PC-3 (cell line): ENCODE measurements at regions of chr4 and their contacts with region 1.

Region 1: DNA sequence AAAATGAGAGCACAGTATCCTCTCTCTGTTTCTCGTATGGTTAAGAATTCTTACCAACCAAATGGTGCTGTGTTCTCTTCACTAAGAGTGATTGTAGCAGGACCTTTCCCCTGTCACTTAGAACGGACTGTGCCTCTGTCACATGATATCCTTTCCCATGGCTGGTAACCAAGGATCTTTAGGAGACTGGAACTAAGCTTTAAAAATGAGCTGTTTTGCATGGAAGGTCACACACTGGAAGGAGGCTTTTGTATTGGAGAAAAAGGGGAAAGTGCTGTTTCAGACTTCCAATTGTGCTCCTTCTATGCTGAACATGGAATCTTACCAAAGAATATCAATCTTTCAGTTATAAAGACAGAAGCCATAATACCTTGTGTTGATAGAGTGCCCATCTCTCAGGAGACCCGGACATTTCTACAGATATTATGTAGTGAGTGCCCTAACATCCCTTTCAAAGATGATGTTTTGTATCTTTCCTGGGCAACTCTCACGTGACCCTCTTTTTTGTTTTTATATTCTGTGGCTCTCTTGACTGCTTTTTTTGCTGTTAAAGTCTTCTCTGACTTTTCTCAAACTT is 148.6 kb downstream of the SLC4A4 start:
- DNase-seq: no peak
- ATAC-seq: no peak
- H3K4me3 ChIP-seq: no peak overlapping the region
- H3K27ac ChIP-seq: no peak overlapping the region
- H3K4me1 ChIP-seq: no peaks in the 10 kb centered on the region
- H3K27me3 ChIP-seq: no peaks in the 10 kb centered on the region
- CTCF ChIP-seq: no peak

Region 2: DNA sequence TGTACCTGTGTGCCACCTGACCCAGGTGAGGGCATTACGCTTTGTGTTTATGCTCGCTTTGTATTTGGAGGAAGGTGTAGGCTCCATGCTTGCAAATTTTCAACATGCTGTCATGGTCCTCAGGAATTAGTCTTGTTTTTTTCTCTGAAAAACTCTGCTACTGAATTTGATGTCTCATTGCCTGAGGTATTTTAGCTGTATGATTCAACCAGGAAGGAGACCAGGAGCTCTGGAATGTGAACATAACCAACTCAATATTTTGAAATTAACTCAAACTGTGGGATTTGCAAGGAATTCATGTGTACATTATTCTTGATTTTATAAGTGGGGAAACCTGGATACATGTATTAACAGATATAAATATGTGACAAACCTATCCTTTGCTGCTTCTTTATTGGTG is 14.5 kb before region 1 on chr4:
- CTCF ChIA-PET with region 1: no interaction called
- POLR2A ChIA-PET with region 1: no interaction called
- intact Hi-C with region 1: loop called (anchors 2 kb)
- DNase-seq: peak; percentile 71
- ATAC-seq: peak; percentile 82
- H3K4me3 ChIP-seq: no peak overlapping the region
- H3K27ac ChIP-seq: peak overlapping the region; percentile 8; the same call in 1 of the 2 replicates
- H3K4me1 ChIP-seq: peaks cover 14% of the 10 kb centered on the region
- H3K27me3 ChIP-seq: no peaks in the 10 kb centered on the region
- CTCF ChIP-seq: no peak